CD8-positive, alpha-beta T cell (primary cell): ENCODE measurements at regions of chr2 and their contacts with region 1.

Region 1: GRCh38 chr2:32063310-32064161 is at the start of gene SPAST:
- DNase-seq: peak; percentile 91 to 99 (median 96)
- ATAC-seq: peak; percentile 88
- H3K4me3 ChIP-seq: peak within 1 kb of the TSS; percentile 72 to 98
- H3K4me3 Mint-ChIP-seq: peak within 1 kb of the TSS; percentile 99
- H3K27ac ChIP-seq: peak within 1 kb of the TSS; percentile 76 to 81
- H3K27ac Mint-ChIP-seq: peak within 1 kb of the TSS; percentile 96
- H3K4me1 ChIP-seq: peaks cover 20% of the 10 kb centered on the region
- H3K4me1 Mint-ChIP-seq: peaks cover 36% of the 10 kb centered on the region
- H3K27me3 ChIP-seq: no peaks in the 10 kb centered on the region
- H3K27me3 Mint-ChIP-seq: no peaks in the 10 kb centered on the region
- CTCF ChIP-seq: peak; percentile 49
- total RNA-seq, gene SPAST: 7.4 to 9.4 TPM

Region 2: DNA sequence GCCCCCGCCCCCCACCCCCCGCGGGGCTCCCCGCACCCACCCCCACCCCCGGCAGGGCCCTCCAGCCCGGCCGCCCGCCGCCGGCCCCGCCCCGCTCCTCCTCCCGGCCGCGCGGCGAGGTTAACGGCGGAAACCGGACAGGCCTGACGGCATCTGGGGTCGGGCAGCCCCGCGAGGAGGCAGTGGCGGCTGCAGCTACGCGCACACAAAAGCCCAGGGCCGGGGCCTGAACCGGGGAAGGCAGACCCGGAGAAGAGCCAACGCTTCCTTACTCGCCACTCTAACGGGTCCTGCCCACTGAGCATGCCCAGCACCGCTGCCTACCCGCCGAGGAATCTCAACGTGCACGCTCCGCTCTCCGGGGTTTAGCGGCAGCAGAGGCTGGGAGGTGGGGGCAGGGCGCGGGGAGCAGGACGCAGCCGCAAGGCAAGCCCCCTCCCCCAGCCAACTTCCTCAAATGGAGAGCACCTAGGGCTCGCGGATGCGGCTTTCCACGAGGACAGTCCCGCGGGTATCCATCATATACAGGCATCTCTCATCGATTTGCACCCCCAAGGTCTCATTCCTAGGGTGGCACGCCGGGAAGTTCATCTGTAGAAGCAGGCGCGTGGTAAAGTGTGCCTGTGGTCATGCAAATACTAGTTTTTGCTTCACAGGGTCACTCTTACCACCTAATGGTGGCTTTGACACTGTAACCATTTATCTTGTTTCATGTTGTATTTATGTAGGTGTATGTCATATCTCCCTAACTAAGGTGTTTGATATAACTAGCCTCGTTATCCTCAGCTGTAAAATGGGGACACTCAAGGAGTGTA is 52.7 kb before region 1 on chr2 and contains the start of gene MEMO1:
- CTCF ChIA-PET with region 1: no interaction called
- POLR2A ChIA-PET with region 1: interaction called, 11 read pairs
- intact Hi-C with region 1: loop called (anchors 1 kb)
- DNase-seq: peak; percentile 76 to 95 (median 92)
- ATAC-seq: peak; percentile 76
- H3K4me3 ChIP-seq: peak within 1 kb of the TSS; percentile 66 to 74
- H3K4me3 Mint-ChIP-seq: peak within 1 kb of the TSS; percentile 85
- H3K27ac ChIP-seq: peak within 1 kb of the TSS; percentile 44 to 79
- H3K27ac Mint-ChIP-seq: peak within 1 kb of the TSS; percentile 91
- H3K4me1 ChIP-seq: peaks cover 17% of the 10 kb centered on the region
- H3K4me1 Mint-ChIP-seq: peaks cover 38% of the 10 kb centered on the region
- H3K27me3 ChIP-seq: no peaks in the 10 kb centered on the region
- H3K27me3 Mint-ChIP-seq: no peaks in the 10 kb centered on the region
- CTCF ChIP-seq: no peak
- total RNA-seq, gene MEMO1: 32.7 to 34.5 TPM

Region 3: DNA sequence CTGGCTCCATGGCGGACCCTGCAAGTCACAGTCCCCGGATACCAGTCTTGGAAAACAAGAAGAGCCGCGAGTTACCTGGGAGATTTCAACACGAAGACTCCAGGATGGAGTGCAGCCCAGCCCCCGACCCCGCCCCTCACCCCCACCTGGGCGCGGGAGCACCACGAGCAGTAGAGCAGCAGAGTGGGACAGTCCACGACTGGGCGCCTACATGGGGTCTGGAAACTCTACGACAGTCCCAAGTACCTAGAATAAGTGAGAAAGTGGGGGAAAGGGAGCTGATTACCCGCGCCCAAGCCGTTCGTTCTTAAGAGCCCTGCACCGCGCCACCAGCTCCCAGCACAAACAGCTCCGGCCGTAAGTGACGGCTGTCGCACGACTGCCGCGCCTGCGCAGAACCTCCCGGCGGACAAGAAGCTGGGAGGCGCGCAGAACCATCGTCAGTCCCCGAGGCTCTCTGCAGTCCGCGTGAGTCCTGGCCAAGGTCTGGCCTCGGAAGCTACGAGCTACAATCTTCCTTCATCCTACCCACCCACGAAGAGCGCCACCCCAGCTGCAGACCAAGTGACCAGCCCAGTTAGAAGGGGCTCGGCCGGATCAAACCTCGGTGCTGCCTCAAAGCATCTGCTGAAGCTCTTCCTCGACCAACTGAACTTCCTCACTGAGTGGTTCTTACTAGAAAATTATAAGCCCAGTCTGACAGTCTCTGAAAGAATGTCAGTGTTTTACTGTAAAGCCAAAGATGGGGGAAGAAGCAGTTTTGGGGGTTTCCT is 23.9 kb before region 1 on chr2 and contains the start of gene DPY30:
- CTCF ChIA-PET with region 1: interaction called, 12 read pairs
- POLR2A ChIA-PET with region 1: interaction called, 38 read pairs
- intact Hi-C with region 1: loop called (anchors 1 kb)
- DNase-seq: peak; percentile 76 to 95 (median 91)
- ATAC-seq: peak; percentile 96
- H3K4me3 ChIP-seq: peak within 1 kb of the TSS; percentile 81 to 83
- H3K4me3 Mint-ChIP-seq: peak within 1 kb of the TSS; percentile 94
- H3K27ac ChIP-seq: peak within 1 kb of the TSS; percentile 64 to 86
- H3K27ac Mint-ChIP-seq: peak within 1 kb of the TSS; percentile 98
- H3K4me1 ChIP-seq: peaks cover 8% of the 10 kb centered on the region
- H3K4me1 Mint-ChIP-seq: peaks cover 20% of the 10 kb centered on the region
- H3K27me3 ChIP-seq: no peaks in the 10 kb centered on the region
- H3K27me3 Mint-ChIP-seq: no peaks in the 10 kb centered on the region
- CTCF ChIP-seq: no peak
- total RNA-seq, gene DPY30: 9.6 to 10.8 TPM

Region 4: GRCh38 chr2:32627814-32628579 is 564.5 kb after region 1 on chr2 and contains the start of gene TTC27:
- CTCF ChIA-PET with region 1: no interaction called
- POLR2A ChIA-PET with region 1: no interaction called
- intact Hi-C with region 1: loop called in 1 of 2 experiments (anchors 5 kb)
- DNase-seq: peak; percentile 87 to 96 (median 95)
- ATAC-seq: peak; percentile 99
- H3K4me3 ChIP-seq: peak within 1 kb of the TSS; percentile 82 to 89
- H3K4me3 Mint-ChIP-seq: peak within 1 kb of the TSS; percentile 93
- H3K27ac ChIP-seq: peak within 1 kb of the TSS; percentile 73
- H3K27ac Mint-ChIP-seq: peak within 1 kb of the TSS; percentile 90
- H3K4me1 ChIP-seq: no peaks in the 10 kb centered on the region
- H3K4me1 Mint-ChIP-seq: peaks cover 35% of the 10 kb centered on the region
- H3K27me3 ChIP-seq: no peaks in the 10 kb centered on the region
- H3K27me3 Mint-ChIP-seq: no peaks in the 10 kb centered on the region
- CTCF ChIP-seq: no peak
- total RNA-seq, gene TTC27: 9.6 to 12.1 TPM

Region 5: GRCh38 chr2:33406622-33407021 is 1343.1 kb after region 1 on chr2:
- CTCF ChIA-PET with region 1: no interaction called
- POLR2A ChIA-PET with region 1: no interaction called
- intact Hi-C with region 1: no loop called
- DNase-seq: no peak
- ATAC-seq: no peak
- H3K4me3 ChIP-seq: no peak overlapping the region
- H3K4me3 Mint-ChIP-seq: no peak overlapping the region
- H3K27ac ChIP-seq: no peak overlapping the region
- H3K27ac Mint-ChIP-seq: no peak overlapping the region
- H3K4me1 ChIP-seq: no peaks in the 10 kb centered on the region
- H3K4me1 Mint-ChIP-seq: no peaks in the 10 kb centered on the region
- H3K27me3 ChIP-seq: no peaks in the 10 kb centered on the region
- H3K27me3 Mint-ChIP-seq: no peaks in the 10 kb centered on the region
- CTCF ChIP-seq: no peak